GM12878 (cell line): ENCODE measurements at regions of chr1 and their contacts with region 1.

Region 1: DNA sequence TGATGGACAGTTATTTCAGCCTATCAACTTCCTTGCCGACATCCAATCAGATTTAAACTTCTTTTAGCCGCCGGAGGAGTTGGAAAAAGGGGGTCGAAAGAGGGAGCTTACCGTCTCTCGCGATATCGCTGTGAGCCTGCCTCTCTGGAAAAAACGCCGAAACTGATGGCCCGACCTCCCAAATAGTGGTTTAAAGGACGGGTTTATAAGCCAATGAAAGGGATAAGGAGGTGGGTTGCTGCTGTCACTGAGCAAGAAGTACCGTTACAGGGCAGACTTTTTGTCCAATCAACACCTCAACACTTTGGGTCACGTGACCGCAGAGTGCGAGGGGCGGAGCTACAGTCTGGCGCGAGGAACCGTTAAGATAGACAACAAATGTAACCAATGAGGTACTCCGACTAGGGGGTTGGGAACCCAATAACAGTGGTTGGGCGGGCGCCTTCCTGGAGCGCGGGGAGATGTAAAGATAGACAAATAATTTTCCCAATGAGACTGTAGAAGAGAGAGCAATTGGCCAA is at the start of gene RBM15:
- DNase-seq: peak; percentile 100
- ATAC-seq: peak; percentile 81
- H3K4me3 ChIP-seq: peak within 1 kb of the TSS; percentile 91
- H3K27ac ChIP-seq: peak within 1 kb of the TSS; percentile 97
- H3K4me1 ChIP-seq: peaks cover 5% of the 10 kb centered on the region
- H3K27me3 ChIP-seq: no peaks in the 10 kb centered on the region
- CTCF ChIP-seq: no peak
- EP300 ChIP-seq: peak in 1 of 2 experiments; percentile 45; a peak in 2 of 4 replicates
- POLR2A ChIP-seq: no peak
- RAD21 ChIP-seq: no peak
- polyA plus RNA-seq, gene RBM15: 3.1 to 3.6 TPM

Region 2: GRCh38 chr1:110203021-110203661 is 135.8 kb before region 1 on chr1:
- CTCF ChIA-PET with region 1: interaction called, 62 read pairs
- POLR2A ChIA-PET with region 1: interaction called, 21 read pairs
- RAD21 ChIA-PET with region 1: interaction called, 80 read pairs
- SMC1A ChIA-PET with region 1: interaction called, 46 read pairs
- in situ Hi-C with region 1: no loop called
- intact Hi-C with region 1: no loop called
- DNase-seq: peak; percentile 17
- ATAC-seq: peak; percentile 84
- H3K4me3 ChIP-seq: no peak overlapping the region
- H3K27ac ChIP-seq: no peak overlapping the region
- H3K4me1 ChIP-seq: no peaks in the 10 kb centered on the region
- H3K27me3 ChIP-seq: peaks cover 0 to 2% of the 10 kb centered on the region in 2 experiments; a peak in 2 of 4 replicates
- CTCF ChIP-seq: peak; percentile 81 to 89 (median 81)
- EP300 ChIP-seq: no peak
- POLR2A ChIP-seq: no peak
- RAD21 ChIP-seq: peak; percentile 90

Region 3: GRCh38 chr1:110300412-110301085 is 38.4 kb before region 1 on chr1:
- CTCF ChIA-PET with region 1: no interaction called
- POLR2A ChIA-PET with region 1: no interaction called
- RAD21 ChIA-PET with region 1: no interaction called
- SMC1A ChIA-PET with region 1: no interaction called
- in situ Hi-C with region 1: no loop called
- intact Hi-C with region 1: no loop called
- DNase-seq: no peak
- ATAC-seq: no peak
- H3K4me3 ChIP-seq: no peak overlapping the region
- H3K27ac ChIP-seq: no peak overlapping the region
- H3K4me1 ChIP-seq: no peaks in the 10 kb centered on the region
- H3K27me3 ChIP-seq: no peaks in the 10 kb centered on the region; a peak in 1 of 4 replicates
- CTCF ChIP-seq: no peak
- EP300 ChIP-seq: no peak
- POLR2A ChIP-seq: no peak
- RAD21 ChIP-seq: no peak

Region 4: DNA sequence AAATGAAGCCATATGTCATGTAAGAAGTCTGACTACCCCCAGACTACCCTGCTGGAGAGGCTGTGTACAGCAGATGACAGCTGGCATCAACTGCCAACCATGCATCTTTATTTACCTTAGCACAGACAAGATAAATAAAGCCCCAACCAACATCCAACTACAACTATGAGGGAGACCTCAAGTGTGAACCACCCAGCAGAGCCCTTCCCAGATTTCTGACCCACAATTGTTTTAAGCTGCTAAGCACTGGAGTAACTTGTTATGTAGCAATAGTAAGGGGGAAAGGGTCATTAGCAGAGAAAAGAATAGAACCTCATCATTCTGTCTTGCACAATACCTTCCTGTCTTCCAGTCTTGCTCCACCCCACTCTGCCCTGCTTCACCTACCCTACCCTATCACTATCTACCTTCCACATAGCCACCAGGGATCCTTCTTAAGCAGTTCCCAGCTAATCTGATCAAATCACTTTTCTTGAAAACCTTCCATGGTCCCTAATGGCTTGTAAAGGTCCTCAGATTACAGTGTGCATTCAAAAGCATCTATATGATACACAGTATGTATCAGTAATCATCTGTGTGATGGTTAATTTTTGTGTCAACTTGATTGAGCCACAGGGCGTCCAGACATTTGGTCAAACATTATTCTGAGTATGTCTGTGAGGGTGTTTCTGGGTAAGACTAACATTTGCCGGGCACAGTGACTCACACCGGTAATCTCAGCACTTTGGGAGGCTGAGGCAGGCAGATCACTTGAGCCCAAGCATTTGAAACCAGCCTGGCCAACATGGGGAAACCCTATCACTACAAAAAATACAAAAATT is 19.4 kb before region 1 on chr1:
- CTCF ChIA-PET with region 1: interaction called, 6 read pairs
- POLR2A ChIA-PET with region 1: interaction called, 3 read pairs
- RAD21 ChIA-PET with region 1: interaction called, 12 read pairs
- SMC1A ChIA-PET with region 1: no interaction called
- in situ Hi-C with region 1: no loop called
- intact Hi-C with region 1: no loop called
- DNase-seq: no peak
- ATAC-seq: no peak
- H3K4me3 ChIP-seq: no peak overlapping the region
- H3K27ac ChIP-seq: no peak overlapping the region
- H3K4me1 ChIP-seq: no peaks in the 10 kb centered on the region
- H3K27me3 ChIP-seq: no peaks in the 10 kb centered on the region
- CTCF ChIP-seq: no peak
- EP300 ChIP-seq: no peak
- POLR2A ChIP-seq: no peak
- RAD21 ChIP-seq: no peak

Region 5: GRCh38 chr1:110407260-110408210 is 68.6 kb after region 1 on chr1 and contains the start of gene LAMTOR5:
- CTCF ChIA-PET with region 1: interaction called, 35 read pairs
- POLR2A ChIA-PET with region 1: interaction called, 43 read pairs
- RAD21 ChIA-PET with region 1: interaction called, 29 read pairs
- SMC1A ChIA-PET with region 1: interaction called, 27 read pairs
- in situ Hi-C with region 1: no loop called
- intact Hi-C with region 1: loop called (anchors 2 kb)
- DNase-seq: peak; percentile 86
- ATAC-seq: peak; percentile 94
- H3K4me3 ChIP-seq: peak within 1 kb of the TSS; percentile 99
- H3K27ac ChIP-seq: peak within 1 kb of the TSS; percentile 85
- H3K4me1 ChIP-seq: peaks cover 10% of the 10 kb centered on the region
- H3K27me3 ChIP-seq: no peaks in the 10 kb centered on the region
- CTCF ChIP-seq: peak in 2 of 3 experiments; percentile 12 to 14; a peak in 2 of 6 replicates
- EP300 ChIP-seq: peak; percentile 22 to 49; a peak in 2 of 4 replicates
- POLR2A ChIP-seq: peak; percentile 97
- RAD21 ChIP-seq: peak; percentile 35; the same call in 1 of the 2 replicates
- polyA plus RNA-seq, gene LAMTOR5: 474 to 613 TPM

Region 6: DNA sequence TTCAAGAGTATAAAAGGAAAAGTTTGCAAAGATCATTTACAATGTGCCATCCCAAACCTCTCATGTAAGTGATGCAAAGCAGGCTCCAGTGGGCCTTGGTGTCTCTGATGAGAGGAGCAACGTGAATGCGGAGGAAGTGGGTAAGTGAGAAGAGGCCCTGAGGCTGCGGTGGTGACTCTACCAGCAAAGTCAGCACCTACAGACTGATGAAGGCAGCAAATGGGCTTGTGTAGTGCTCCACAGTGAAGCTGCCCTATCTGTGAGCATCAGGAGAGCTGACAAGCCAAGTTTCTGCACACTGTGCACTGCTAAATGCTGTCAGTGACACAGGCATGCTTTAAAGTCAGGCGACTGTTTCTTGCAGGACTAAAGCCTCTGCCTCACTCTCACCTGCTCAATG is 1265.0 kb after region 1 on chr1:
- CTCF ChIA-PET with region 1: no interaction called
- POLR2A ChIA-PET with region 1: no interaction called
- RAD21 ChIA-PET with region 1: no interaction called
- SMC1A ChIA-PET with region 1: no interaction called
- in situ Hi-C with region 1: no loop called
- intact Hi-C with region 1: loop called (anchors 5 kb)
- DNase-seq: no peak
- ATAC-seq: peak; percentile 56
- H3K4me3 ChIP-seq: no peak overlapping the region
- H3K27ac ChIP-seq: peak overlapping the region; percentile 98
- H3K4me1 ChIP-seq: peaks cover 54% of the 10 kb centered on the region
- H3K27me3 ChIP-seq: no peaks in the 10 kb centered on the region
- CTCF ChIP-seq: no peak
- EP300 ChIP-seq: no peak
- POLR2A ChIP-seq: peak; percentile 70
- RAD21 ChIP-seq: no peak